ENCODE measurements at regions of chr6 and their contacts with region 1.

Region 1: GRCh38 chr6:15206912-15207311 is 39.0 kb upstream of the JARID2 start:
- DNase-seq: no peak
- ATAC-seq: no peak
- H3K4me3 Mint-ChIP-seq: no peak overlapping the region
- H3K27ac Mint-ChIP-seq: no peak overlapping the region
- H3K4me1 Mint-ChIP-seq: no peaks in the 10 kb centered on the region
- H3K27me3 Mint-ChIP-seq: peaks cover 3% of the 10 kb centered on the region
- CTCF ChIP-seq: no peak

Region 2: GRCh38 chr6:14431385-14432330 is 775.3 kb before region 1 on chr6:
- CTCF ChIA-PET with region 1: no interaction called
- POLR2A ChIA-PET with region 1: no interaction called
- intact Hi-C with region 1: no loop called
- DNase-seq: no peak
- ATAC-seq: no peak
- H3K4me3 Mint-ChIP-seq: no peak overlapping the region
- H3K27ac Mint-ChIP-seq: no peak overlapping the region
- H3K4me1 Mint-ChIP-seq: peaks cover 14% of the 10 kb centered on the region
- H3K27me3 Mint-ChIP-seq: no peaks in the 10 kb centered on the region
- CTCF ChIP-seq: no peak

Region 3: DNA sequence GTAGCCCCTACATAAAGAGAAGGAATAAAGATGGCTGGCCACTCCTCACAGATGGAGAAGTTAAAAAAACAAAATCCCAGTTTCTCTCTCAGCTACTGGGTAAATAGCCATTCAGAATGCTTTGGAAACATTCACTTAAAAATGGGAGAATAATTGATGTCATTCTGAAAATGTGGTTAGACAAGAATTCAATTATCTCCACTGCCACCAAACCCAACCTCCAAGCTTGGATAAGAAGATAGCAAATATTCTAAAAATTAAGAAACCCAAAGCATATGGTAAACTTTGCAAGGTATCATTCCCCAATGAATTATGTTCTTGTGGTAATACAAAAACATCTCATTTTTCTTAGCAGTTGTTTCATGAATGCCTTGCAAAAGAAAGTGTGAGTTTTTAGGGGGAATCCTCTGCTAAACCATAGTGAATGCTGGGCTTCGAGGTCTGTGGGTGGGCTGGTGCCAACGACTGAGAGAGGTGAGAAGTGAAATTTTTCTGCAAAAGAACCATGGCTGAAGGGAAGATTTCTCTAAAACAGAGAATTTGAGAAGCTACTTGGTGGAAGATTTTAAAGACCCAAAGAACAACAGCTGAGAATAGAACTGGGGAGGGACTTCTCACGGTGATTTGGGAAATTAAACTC is 458.9 kb before region 1 on chr6:
- CTCF ChIA-PET with region 1: no interaction called
- POLR2A ChIA-PET with region 1: interaction called, 12 read pairs
- intact Hi-C with region 1: no loop called
- DNase-seq: no peak
- ATAC-seq: no peak
- H3K4me3 Mint-ChIP-seq: no peak overlapping the region
- H3K27ac Mint-ChIP-seq: no peak overlapping the region
- H3K4me1 Mint-ChIP-seq: peaks cover 13% of the 10 kb centered on the region
- H3K27me3 Mint-ChIP-seq: peaks cover 2% of the 10 kb centered on the region
- CTCF ChIP-seq: no peak

Region 4: GRCh38 chr6:15109338-15110090 is 97.4 kb before region 1 on chr6:
- CTCF ChIA-PET with region 1: no interaction called
- POLR2A ChIA-PET with region 1: no interaction called
- intact Hi-C with region 1: no loop called
- DNase-seq: no peak
- ATAC-seq: no peak
- H3K4me3 Mint-ChIP-seq: no peak overlapping the region
- H3K27ac Mint-ChIP-seq: no peak overlapping the region
- H3K4me1 Mint-ChIP-seq: peaks cover 3% of the 10 kb centered on the region
- H3K27me3 Mint-ChIP-seq: no peaks in the 10 kb centered on the region
- CTCF ChIP-seq: no peak

Region 5: GRCh38 chr6:15715060-15715459 is 508.1 kb after region 1 on chr6:
- CTCF ChIA-PET with region 1: no interaction called
- POLR2A ChIA-PET with region 1: no interaction called
- intact Hi-C with region 1: no loop called
- DNase-seq: no peak
- ATAC-seq: no peak
- H3K4me3 Mint-ChIP-seq: no peak overlapping the region
- H3K27ac Mint-ChIP-seq: no peak overlapping the region
- H3K4me1 Mint-ChIP-seq: no peaks in the 10 kb centered on the region
- H3K27me3 Mint-ChIP-seq: peaks cover 8% of the 10 kb centered on the region
- CTCF ChIP-seq: no peak

Region 6: GRCh38 chr6:16273256-16273655 is 1066.3 kb after region 1 on chr6:
- CTCF ChIA-PET with region 1: no interaction called
- POLR2A ChIA-PET with region 1: no interaction called
- intact Hi-C with region 1: no loop called
- DNase-seq: no peak
- ATAC-seq: no peak
- H3K4me3 Mint-ChIP-seq: no peak overlapping the region
- H3K27ac Mint-ChIP-seq: no peak overlapping the region
- H3K4me1 Mint-ChIP-seq: peaks cover 2% of the 10 kb centered on the region
- H3K27me3 Mint-ChIP-seq: peaks cover 7% of the 10 kb centered on the region
- CTCF ChIP-seq: no peak